Uterus (tissue), 4 donors: ENCODE measurements at regions of chr1 and their contacts with region 1.

Region 1: DNA sequence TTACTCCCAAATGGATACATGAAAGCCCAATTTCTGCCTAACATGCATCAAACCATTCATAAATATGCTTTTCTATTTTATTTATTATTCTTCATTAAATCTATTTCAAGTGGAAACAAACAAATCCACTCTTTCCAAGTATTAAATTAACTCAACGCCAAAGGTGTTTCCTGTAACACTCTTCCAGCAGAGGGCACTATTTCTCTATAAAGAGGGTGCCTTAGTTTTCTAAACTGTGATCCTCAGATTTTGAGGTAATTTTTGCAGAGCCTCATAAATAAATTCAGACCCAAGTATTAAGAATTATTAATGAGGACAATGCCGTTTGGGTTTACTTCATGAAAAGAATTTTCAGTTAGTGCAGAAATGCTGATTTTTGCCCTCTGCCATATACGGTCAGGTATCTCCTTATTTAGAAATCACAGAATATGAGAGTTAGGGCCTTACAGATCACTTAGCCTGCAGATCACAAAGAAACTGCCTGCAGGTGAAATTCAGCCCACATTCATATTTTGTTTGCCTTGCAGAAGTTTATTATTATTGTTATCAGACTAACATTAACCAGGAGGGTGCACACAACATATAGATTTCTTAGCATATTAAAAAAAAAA is 40.1 kb upstream of the MYSM1 start:
- DNase-seq: no peak
- H3K4me3 ChIP-seq: no peak overlapping the region
- H3K27ac ChIP-seq: no peak overlapping the region
- H3K4me1 ChIP-seq: peaks cover 0 to 4% of the 10 kb centered on the region in 2 donors
- H3K27me3 ChIP-seq: no peaks in the 10 kb centered on the region
- CTCF ChIP-seq: peak; percentile 77 to 91 (median 83)
- POLR2A ChIP-seq: no peak

Region 2: GRCh38 chr1:59699227-59699847 is 959.4 kb after region 1 on chr1:
- intact Hi-C with region 1: loop called (anchors 5 kb)
- DNase-seq: no peak
- H3K4me3 ChIP-seq: no peak overlapping the region
- H3K27ac ChIP-seq: peak overlapping the region; percentile 37 to 73
- H3K4me1 ChIP-seq: peaks cover 0 to 7% of the 10 kb centered on the region in 2 donors
- H3K27me3 ChIP-seq: no peaks in the 10 kb centered on the region
- CTCF ChIP-seq: peak; percentile 89 to 95 (median 94)
- POLR2A ChIP-seq: no peak

Region 3: DNA sequence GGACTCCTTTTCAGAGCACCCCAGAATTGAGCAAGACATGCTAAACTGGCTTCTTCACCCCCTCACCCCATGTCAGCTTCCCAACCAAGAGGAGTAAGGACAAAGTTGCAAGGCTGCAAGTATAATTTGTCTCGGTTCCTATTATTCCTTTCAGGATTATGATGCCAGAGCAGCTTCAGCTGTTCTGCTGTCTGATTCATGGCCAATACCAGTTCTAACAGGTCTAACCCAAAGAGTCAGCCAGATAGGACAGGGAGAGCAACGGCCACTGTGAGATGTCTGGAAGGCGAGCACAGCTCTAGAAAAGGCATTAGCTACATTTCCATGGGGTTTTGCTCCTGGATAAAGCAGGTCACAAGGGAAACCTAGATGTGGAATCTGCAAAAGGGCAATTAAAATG is 1021.5 kb after region 1 on chr1:
- intact Hi-C with region 1: loop called (anchors 5 kb)
- DNase-seq: no peak
- H3K4me3 ChIP-seq: no peak overlapping the region
- H3K27ac ChIP-seq: no peak overlapping the region
- H3K4me1 ChIP-seq: no peaks in the 10 kb centered on the region
- H3K27me3 ChIP-seq: no peaks in the 10 kb centered on the region
- CTCF ChIP-seq: no peak
- POLR2A ChIP-seq: no peak